Activated naive CD4-positive, alpha-beta T cell treated with anti-CD3 and anti-CD28 coated beads for 36 hours (primary cell): ENCODE measurements at regions of chr12 and their contacts with region 1.

Region 1: GRCh38 chr12:103930034-103930786 is at the start of gene HSP90B1:
- DNase-seq: peak; percentile 100
- H3K4me3 Mint-ChIP-seq: peak within 1 kb of the TSS; percentile 81
- H3K27ac Mint-ChIP-seq: peak within 1 kb of the TSS; percentile 100
- H3K4me1 Mint-ChIP-seq: peaks cover 57% of the 10 kb centered on the region
- H3K27me3 Mint-ChIP-seq: no peaks in the 10 kb centered on the region
- total RNA-seq, gene HSP90B1: 392 to 418 TPM

Region 2: DNA sequence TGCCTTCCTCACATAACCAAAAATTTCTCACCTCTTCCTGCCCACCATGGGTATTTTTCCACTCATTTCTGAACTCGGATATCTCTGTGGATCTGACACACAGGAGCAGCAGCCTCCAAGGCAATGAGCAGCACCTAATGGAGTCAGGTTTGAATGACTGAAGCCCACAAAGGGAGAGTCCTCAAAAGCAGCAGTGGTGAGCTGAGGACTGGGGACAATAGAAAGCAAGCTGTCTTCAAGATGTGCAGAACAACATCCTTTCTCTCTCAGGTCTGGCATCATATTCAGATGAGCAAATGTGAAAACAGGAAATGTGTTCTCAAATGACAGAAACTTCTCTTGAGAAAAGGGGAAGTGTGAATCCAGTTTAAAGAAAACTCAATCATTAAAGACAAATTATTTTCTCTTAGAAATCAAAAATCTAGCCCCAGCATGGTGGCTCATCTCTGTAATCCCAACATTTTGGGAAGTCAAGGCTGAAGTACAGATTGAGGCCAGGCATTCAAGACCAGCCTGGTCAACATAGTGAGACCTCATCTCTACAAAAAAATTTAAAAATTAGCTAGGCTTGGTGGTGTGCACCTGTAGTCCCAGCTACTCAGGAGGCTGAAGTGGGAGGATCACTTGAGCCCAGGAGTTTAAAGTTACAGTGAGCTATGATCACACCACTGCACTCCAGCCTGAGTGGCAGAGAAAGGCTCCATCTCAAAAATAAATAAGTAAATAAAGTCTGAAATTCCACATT is 488.6 kb before region 1 on chr12:
- CTCF ChIA-PET with region 1: no interaction called
- intact Hi-C with region 1: loop called (anchors 5 kb)
- DNase-seq: peak; percentile 51
- H3K4me3 Mint-ChIP-seq: peak overlapping the region; percentile 46
- H3K27ac Mint-ChIP-seq: peak overlapping the region; percentile 77
- H3K4me1 Mint-ChIP-seq: peaks cover 17% of the 10 kb centered on the region
- H3K27me3 Mint-ChIP-seq: no peaks in the 10 kb centered on the region

Region 3: GRCh38 chr12:103794309-103795213 is 135.6 kb before region 1 on chr12:
- CTCF ChIA-PET with region 1: no interaction called
- intact Hi-C with region 1: no loop called
- DNase-seq: no peak
- H3K4me3 Mint-ChIP-seq: no peak overlapping the region
- H3K27ac Mint-ChIP-seq: no peak overlapping the region
- H3K4me1 Mint-ChIP-seq: no peaks in the 10 kb centered on the region
- H3K27me3 Mint-ChIP-seq: no peaks in the 10 kb centered on the region

Region 4: DNA sequence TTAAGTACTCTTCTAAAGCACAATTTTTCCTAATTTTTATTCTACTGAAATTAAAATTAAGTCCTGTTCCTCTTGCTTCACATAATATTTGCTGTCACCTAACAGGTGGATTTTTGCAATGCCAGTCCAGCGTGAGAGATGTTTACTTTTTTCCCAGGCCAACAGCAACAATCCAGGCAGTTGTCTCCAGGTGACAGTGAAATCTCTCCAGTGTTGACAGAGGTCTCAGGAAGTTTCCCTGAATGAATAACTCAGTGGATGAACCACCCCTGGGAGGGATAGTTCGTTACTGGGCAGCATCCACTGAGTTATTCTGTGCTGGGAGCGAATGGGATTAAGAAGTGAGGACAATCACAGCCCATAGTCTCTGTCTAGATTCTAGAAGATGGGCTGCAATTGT is 82.1 kb before region 1 on chr12:
- CTCF ChIA-PET with region 1: no interaction called
- intact Hi-C with region 1: no loop called
- DNase-seq: no peak
- H3K4me3 Mint-ChIP-seq: no peak overlapping the region
- H3K27ac Mint-ChIP-seq: no peak overlapping the region
- H3K4me1 Mint-ChIP-seq: peaks cover 4% of the 10 kb centered on the region
- H3K27me3 Mint-ChIP-seq: no peaks in the 10 kb centered on the region

Region 5: DNA sequence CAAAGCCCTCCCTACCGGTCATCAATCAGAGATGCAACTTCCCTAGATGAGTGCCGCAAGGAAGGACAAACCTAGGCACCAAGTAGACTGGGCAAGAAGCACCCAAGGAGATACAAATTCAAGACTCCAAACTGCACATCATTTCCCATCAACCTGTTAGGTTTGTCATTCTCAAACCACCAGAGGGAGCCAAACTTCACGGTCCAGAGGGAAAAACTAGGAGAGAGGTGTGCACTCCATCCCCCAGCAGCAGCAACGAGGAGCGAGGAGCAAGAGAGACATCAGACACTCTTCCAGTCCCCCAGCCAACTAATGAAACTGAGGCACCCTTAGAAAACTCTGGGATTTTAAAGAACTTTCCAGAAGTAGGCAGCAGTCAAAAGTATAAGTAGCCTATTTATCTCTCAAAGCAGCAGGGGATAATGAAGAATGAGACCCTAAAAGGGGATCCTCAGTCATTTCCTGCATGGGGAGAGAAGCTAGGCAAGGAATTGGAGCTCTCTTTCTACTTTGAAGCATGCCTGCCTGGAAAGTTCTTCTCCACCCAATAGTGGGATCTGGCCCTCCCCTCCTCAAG is 52.2 kb before region 1 on chr12:
- CTCF ChIA-PET with region 1: interaction called, 4 read pairs
- intact Hi-C with region 1: loop called (anchors 1 kb)
- DNase-seq: peak; percentile 79
- H3K4me3 Mint-ChIP-seq: no peak overlapping the region
- H3K27ac Mint-ChIP-seq: no peak overlapping the region
- H3K4me1 Mint-ChIP-seq: peaks cover 24% of the 10 kb centered on the region
- H3K27me3 Mint-ChIP-seq: no peaks in the 10 kb centered on the region

Region 6: DNA sequence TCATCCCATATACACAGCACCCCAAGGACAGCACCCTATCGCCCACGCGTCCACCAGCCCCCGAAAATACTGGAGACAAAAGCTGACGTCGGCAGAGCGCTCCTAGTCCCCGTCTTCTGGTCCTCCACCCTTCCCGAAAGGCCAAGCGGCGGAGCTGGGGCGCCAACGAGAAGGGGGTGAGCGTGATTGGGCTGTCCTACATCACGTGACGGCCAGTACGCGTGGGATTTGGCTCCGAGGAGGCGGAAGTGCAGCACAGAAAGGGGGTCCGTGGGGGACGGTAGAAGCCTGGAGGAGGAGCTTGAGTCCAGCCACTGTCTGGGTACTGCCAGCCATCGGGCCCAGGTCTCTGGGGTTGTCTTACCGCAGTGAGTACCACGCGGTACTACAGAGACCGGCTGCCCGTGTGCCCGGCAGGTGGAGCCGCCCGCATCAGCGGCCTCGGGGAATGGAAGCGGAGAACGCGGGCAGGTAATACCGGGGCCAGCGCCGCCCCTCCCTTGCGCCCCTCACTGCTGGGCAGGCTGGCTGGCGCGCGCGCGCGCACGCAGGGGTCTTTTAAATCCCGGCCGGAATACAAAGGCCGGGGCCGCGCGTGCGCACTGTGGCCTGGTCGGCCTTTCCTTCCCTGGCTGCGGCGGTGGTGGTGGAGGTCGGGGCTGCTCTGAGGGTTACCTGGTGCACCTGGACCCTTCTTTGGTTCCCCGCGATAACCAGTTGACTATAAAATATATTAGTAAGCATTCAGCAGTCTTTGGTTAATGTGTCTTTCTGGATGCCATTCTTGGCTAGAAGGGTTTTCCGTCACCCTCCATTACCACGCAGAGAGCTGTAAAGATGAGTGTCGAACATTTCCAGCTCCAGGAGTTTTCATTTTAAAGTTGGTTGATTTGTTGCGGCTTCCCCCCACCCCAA is 35.6 kb after region 1 on chr12 and contains the start of gene TDG:
- CTCF ChIA-PET with region 1: interaction called, 3 read pairs
- intact Hi-C with region 1: loop called (anchors 1 kb)
- DNase-seq: peak; percentile 99
- H3K4me3 Mint-ChIP-seq: peak within 1 kb of the TSS; percentile 96
- H3K27ac Mint-ChIP-seq: peak within 1 kb of the TSS; percentile 97
- H3K4me1 Mint-ChIP-seq: peaks cover 48% of the 10 kb centered on the region
- H3K27me3 Mint-ChIP-seq: no peaks in the 10 kb centered on the region
- total RNA-seq, gene TDG: 18.0 to 19.3 TPM

Region 7: GRCh38 chr12:104108755-104109445 is 178.7 kb after region 1 on chr12:
- CTCF ChIA-PET with region 1: interaction called, 3 read pairs
- intact Hi-C with region 1: loop called (anchors 1 kb)
- DNase-seq: peak; percentile 96
- H3K4me3 Mint-ChIP-seq: no peak overlapping the region
- H3K27ac Mint-ChIP-seq: no peak overlapping the region
- H3K4me1 Mint-ChIP-seq: peaks cover 7% of the 10 kb centered on the region
- H3K27me3 Mint-ChIP-seq: no peaks in the 10 kb centered on the region

Region 8: GRCh38 chr12:104303538-104304151 is 373.4 kb after region 1 on chr12 and contains the start of gene EID3:
- CTCF ChIA-PET with region 1: no interaction called
- intact Hi-C with region 1: loop called (anchors 1 kb)
- DNase-seq: peak; percentile 90
- H3K4me3 Mint-ChIP-seq: peak within 1 kb of the TSS; percentile 87
- H3K27ac Mint-ChIP-seq: peak within 1 kb of the TSS; percentile 77
- H3K4me1 Mint-ChIP-seq: peaks cover 52% of the 10 kb centered on the region
- H3K27me3 Mint-ChIP-seq: no peaks in the 10 kb centered on the region
- total RNA-seq, gene EID3: 3.4 TPM

Region 9: DNA sequence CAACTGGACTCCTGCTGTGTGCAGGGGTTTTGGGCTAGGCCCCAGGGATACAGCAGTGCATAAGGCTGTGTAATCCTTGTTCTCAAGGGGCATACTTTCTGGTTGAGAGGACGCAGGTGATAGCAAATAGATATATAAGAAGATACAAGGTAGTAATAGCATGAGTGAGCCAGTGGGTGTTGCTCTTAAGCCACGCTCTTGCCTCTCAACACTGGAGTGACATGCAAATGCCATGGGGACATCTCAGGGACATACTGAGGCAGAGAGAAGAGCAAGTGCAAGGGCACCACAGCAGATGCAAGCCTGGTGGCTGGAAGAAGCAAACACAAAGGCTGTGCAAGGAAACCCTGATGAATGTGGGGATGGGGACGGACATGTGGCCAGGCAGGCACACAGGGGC is 749.9 kb after region 1 on chr12:
- CTCF ChIA-PET with region 1: no interaction called
- intact Hi-C with region 1: loop called (anchors 5 kb)
- DNase-seq: peak; percentile 70
- H3K4me3 Mint-ChIP-seq: no peak overlapping the region
- H3K27ac Mint-ChIP-seq: peak overlapping the region; percentile 25
- H3K4me1 Mint-ChIP-seq: peaks cover 44% of the 10 kb centered on the region
- H3K27me3 Mint-ChIP-seq: no peaks in the 10 kb centered on the region